ENCODE measurements at regions of chr7 and their contacts with region 1.

Region 1: DNA sequence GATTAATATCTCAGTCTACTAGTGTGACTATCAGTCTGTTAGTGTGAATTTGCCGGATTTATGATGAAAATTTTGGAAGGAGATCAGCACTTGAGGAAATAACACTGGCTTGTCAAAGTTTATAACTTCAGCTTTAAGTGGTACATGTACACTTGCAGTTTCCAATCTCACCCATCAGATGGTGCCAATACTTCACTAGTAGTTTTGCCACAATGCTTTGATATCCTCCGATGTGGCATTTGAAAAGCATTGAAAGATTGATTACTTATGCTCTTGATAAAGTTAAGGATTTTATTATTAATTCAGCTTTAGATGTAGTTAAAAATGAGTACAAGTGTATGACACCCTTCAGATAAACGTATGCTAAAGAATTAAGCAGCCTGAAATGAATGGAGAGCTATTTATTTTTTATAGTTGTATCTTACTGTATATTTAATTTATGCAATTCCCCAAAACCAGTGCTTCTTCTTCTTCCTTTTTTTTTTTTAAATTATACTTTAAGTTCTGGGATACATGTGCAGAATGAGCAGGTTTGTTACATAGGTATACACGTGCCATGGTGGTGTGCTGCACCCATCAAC is 98.2 kb downstream of the ANLN start:
- DNase-seq: peak; percentile 41
- H3K4me3 Mint-ChIP-seq: no peak overlapping the region
- H3K27ac Mint-ChIP-seq: no peak overlapping the region
- H3K4me1 Mint-ChIP-seq: peaks cover 1% of the 10 kb centered on the region
- H3K27me3 Mint-ChIP-seq: peaks cover 2% of the 10 kb centered on the region

Region 2: GRCh38 chr7:36563706-36564327 is 76.0 kb after region 1 on chr7:
- CTCF ChIA-PET with region 1: no interaction called
- POLR2A ChIA-PET with region 1: no interaction called
- DNase-seq: no peak
- H3K4me3 Mint-ChIP-seq: no peak overlapping the region
- H3K27ac Mint-ChIP-seq: no peak overlapping the region
- H3K4me1 Mint-ChIP-seq: peaks cover 3% of the 10 kb centered on the region
- H3K27me3 Mint-ChIP-seq: no peaks in the 10 kb centered on the region

Region 3: DNA sequence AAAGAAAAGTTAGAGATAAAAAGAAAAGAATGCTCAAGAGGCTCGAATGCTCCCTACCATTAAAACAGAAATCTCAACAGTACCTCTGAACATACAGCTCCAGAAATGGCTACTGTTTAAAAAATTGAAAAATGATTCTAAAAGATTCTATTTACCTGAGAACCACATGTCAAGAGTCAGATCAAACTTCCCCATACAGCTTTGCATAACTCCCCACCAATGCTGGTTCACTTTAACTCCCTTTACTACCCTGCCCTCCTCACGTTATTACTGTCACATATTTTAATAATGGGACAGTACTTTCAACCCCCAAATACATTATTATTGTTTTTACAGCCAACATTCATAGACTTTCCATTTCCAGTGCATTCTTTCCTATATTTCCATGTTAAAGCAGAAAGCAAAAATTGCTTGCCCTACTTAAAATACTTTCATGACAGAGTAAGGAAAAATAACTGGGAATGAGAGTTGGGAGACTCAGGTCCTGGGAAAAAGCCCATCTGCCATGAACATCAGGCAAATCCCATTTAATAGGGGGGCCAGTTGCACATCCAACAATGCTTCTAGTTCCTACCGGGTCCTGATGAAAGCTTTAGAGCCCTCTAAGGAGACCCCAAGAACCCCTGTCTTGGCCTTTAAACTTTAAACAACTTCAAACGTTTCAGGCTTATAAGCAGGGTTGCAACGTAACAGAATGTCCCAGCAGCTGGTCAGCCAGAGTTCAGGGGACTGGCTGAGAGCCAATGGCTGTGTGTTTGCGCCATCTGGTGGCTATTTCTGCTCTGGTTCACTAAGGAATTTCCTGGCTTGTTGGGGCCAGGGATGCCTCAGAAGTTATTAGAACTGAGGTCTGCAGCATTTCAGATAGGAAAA is 713.4 kb after region 1 on chr7:
- CTCF ChIA-PET with region 1: interaction called, 25 read pairs
- POLR2A ChIA-PET with region 1: interaction called, 3 read pairs
- DNase-seq: peak; percentile 54
- H3K4me3 Mint-ChIP-seq: no peak overlapping the region
- H3K27ac Mint-ChIP-seq: no peak overlapping the region
- H3K4me1 Mint-ChIP-seq: peaks cover 9% of the 10 kb centered on the region
- H3K27me3 Mint-ChIP-seq: no peaks in the 10 kb centered on the region

Measured in activated CD4-positive, alpha-beta memory T cell treated with anti-CD3 and anti-CD28 coated beads, Interleukin-2, amount 10 ng/mL, durations not matched to agents 7 days and 5 days (primary cell).